ENCODE measurements at regions of chr9 and their contacts with region 1.

Region 1: GRCh38 chr9:4435197-4435596 is 55.1 kb upstream of the SLC1A1 start:
- DNase-seq: no peak
- H3K4me3 Mint-ChIP-seq: no peak overlapping the region
- H3K27ac Mint-ChIP-seq: no peak overlapping the region
- H3K4me1 Mint-ChIP-seq: peaks cover 11% of the 10 kb centered on the region
- H3K27me3 Mint-ChIP-seq: no peaks in the 10 kb centered on the region
- CTCF ChIP-seq: no peak

Region 2: GRCh38 chr9:4262735-4263141 is 172.5 kb before region 1 on chr9:
- CTCF ChIA-PET with region 1: no interaction called
- intact Hi-C with region 1: no loop called
- DNase-seq: peak; percentile 8
- H3K4me3 Mint-ChIP-seq: peak overlapping the region; percentile 9
- H3K27ac Mint-ChIP-seq: peak overlapping the region; percentile 83
- H3K4me1 Mint-ChIP-seq: peaks cover 66% of the 10 kb centered on the region
- H3K27me3 Mint-ChIP-seq: no peaks in the 10 kb centered on the region
- CTCF ChIP-seq: no peak

Region 3: GRCh38 chr9:4339357-4339756 is 95.8 kb before region 1 on chr9:
- CTCF ChIA-PET with region 1: interaction called, 10 read pairs
- intact Hi-C with region 1: no loop called
- DNase-seq: peak; percentile 75
- H3K4me3 Mint-ChIP-seq: peak overlapping the region; percentile 24
- H3K27ac Mint-ChIP-seq: peak overlapping the region; percentile 86
- H3K4me1 Mint-ChIP-seq: peaks cover 14% of the 10 kb centered on the region
- H3K27me3 Mint-ChIP-seq: no peaks in the 10 kb centered on the region
- CTCF ChIP-seq: peak; percentile 66

Region 4: DNA sequence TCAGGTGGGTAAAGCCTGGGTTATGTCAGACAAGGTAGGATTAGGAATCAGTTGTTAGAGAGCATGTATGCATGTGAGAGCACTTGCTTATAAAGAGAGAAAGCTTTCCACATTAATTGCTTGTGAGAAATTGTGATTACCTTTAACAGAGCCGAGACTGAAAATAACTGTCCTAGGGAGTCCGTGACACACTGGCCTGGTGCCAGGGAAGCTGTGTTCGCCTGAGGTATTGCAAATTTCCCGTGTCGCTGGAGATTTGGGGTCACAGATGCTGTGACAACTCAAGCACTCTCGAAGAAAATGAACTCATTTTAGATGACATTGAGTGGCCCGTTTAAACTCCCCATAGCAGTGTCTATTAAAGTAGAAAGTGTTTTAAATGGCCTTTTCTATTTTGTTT is 64.7 kb after region 1 on chr9:
- CTCF ChIA-PET with region 1: interaction called, 16 read pairs
- intact Hi-C with region 1: no loop called
- DNase-seq: peak; percentile 54
- H3K4me3 Mint-ChIP-seq: peak overlapping the region; percentile 55
- H3K27ac Mint-ChIP-seq: peak overlapping the region; percentile 85
- H3K4me1 Mint-ChIP-seq: peaks cover 63% of the 10 kb centered on the region
- H3K27me3 Mint-ChIP-seq: no peaks in the 10 kb centered on the region
- CTCF ChIP-seq: no peak

Measured in Calu3 (cell line).